Activated naive CD4-positive, alpha-beta T cell treated with anti-CD3 and anti-CD28 coated beads for 36 hours (primary cell): ENCODE measurements at regions of chr3 and their contacts with region 1.

Region 1: DNA sequence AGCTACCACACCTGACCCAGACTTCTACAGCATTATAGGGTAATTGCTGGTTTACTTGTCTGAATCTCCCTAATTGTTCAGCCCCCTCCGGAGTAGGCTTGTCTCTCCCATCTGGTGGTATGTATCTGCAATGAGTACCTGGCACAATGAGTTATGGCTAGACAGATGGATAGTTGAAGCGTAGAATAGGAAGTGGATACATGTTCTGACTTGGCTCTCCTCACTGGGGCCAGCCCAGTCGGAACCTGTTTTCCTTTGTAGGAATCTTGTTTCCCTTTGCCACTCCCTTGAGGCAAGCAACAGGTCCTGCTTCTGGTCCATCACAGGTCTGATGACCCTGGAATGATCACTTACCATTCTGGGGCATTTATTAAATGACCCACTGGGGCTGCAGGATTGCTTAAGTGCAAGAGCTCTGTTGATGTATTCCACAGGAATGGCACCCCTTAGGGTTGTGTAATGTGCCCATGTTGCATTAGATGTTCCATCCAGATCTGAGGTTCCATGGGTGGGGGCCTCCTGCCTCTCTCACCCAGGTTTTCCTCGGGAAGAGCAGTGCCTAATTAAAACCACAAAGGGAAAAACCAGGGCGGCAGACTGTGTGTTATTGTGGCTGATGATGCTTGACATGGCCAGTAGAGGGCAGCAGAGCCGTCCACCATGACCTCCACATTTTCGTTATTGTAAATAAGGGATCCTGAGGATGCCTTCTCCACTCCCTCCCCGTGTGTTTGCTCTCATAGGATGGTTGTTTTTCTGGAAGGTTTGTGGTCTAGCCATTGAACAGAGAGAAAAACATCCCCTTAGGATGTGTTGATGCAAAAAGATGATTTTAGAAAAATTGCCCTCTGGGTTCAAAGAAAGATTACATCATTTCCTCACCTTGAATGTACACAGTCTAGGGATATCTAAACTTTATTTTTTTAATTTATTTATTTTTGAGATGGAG is 58.0 kb downstream of the CMTM8 start:
- DNase-seq: peak; percentile 80
- H3K4me3 Mint-ChIP-seq: peak overlapping the region; percentile 45
- H3K27ac Mint-ChIP-seq: peak overlapping the region; percentile 85
- H3K4me1 Mint-ChIP-seq: peaks cover 24% of the 10 kb centered on the region
- H3K27me3 Mint-ChIP-seq: no peaks in the 10 kb centered on the region

Region 2: DNA sequence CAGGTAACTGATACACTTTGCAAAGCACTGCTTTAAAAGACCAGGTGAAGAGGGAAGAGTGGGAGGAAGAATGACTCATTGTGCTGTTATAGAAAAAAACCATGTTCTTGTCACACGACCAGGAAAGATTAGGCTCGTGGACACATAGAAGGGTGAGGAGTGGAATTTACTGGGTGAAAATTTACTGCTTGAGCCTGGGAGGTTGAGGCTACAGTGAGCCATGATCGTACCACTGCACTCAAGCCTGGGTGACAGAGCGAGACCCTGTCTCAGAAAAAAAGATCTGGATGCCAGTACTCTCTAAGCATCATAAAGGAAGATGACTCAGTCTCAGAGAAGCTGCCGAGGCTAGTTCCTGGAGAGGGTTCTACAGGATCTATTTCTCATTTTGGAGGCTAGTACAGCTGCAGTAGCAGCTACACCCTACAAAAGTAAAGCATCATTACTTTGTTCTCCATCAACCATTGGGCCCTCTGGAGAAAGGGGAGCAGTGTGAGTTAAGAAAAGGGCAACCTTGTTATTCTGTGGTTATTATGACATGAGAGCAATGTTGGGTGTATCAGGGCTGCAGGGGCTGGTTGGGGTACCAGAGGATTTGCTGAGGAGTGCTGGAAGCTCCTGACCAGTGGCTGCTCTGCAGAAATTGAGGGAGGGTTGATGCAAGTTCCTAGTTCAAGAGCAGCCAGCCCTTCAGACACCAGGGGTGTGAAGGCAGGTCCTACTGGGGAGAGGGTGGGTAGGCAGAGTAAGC is 17.4 kb after region 1 on chr3:
- CTCF ChIA-PET with region 1: interaction called, 10 read pairs
- intact Hi-C with region 1: loop called (anchors 2 kb)
- DNase-seq: peak; percentile 70
- H3K4me3 Mint-ChIP-seq: peak overlapping the region; percentile 61
- H3K27ac Mint-ChIP-seq: peak overlapping the region; percentile 86
- H3K4me1 Mint-ChIP-seq: peaks cover 32% of the 10 kb centered on the region
- H3K27me3 Mint-ChIP-seq: no peaks in the 10 kb centered on the region

Region 3: DNA sequence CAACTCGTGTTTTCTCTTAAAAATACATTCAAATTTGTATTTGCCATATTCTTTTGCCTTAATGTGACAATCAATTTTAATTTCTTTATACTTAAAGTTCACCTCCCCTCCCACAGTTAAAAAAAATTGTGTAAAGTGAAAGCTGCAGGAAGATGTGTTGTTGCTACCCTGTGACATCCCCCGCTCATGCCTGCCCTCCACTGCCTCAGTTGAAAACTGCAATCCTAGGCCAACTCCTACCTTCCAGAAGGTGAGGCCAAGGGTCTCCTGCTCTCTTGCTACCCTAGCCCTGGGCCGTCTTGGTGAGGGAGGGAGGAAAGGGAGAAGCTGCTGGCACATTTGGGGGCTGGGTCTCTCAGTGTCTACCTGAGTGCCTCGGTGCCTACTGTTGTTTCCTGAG is 38.1 kb after region 1 on chr3:
- CTCF ChIA-PET with region 1: interaction called, 63 read pairs
- intact Hi-C with region 1: loop called (anchors 1 kb)
- DNase-seq: peak; percentile 83
- H3K4me3 Mint-ChIP-seq: no peak overlapping the region
- H3K27ac Mint-ChIP-seq: peak overlapping the region; percentile 19
- H3K4me1 Mint-ChIP-seq: peaks cover 44% of the 10 kb centered on the region
- H3K27me3 Mint-ChIP-seq: no peaks in the 10 kb centered on the region

Region 4: DNA sequence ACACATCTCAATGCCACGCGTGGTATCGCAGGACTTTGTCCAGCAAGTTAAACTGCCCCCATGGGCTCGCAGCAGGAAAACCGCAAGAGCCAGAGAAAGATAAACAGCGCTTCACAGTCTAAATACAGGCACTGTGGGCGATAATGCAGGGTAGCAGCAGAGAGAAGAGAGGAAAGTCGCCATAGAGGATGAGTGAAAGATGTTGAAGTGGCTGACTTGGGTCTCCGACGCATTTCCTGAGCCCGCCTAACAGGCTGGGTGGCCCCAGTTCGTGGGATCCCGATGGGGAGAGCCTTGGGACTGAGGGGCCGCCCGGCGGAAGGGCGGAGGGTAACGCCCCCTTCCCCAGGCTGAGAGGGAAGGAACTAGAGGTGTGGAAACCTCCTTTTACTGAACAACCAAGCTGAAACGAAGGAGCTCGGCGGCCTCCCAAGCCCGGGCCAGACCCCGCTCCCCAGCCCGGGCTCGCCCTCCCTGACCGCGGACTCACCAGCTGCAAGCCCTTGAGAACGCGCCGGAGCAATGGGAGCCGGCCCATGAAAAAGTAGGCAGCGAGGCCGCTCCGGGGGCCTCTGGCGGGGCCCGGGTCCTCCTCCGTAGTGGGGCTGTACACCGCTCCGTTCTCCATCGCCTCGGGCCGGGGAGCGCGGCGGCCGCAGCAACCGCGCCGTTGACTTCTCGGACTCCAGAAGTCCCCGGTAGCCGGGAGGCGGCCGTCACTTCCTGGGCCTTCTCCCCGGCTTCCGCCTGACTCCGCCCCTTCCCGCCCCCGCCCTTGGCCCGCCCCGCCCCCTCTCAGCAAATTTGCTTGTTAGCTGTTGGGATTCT is 205.8 kb after region 1 on chr3 and contains the start of gene CMTM6:
- CTCF ChIA-PET with region 1: interaction called, 4 read pairs
- intact Hi-C with region 1: loop called (anchors 2 kb)
- DNase-seq: peak; percentile 81
- H3K4me3 Mint-ChIP-seq: peak within 1 kb of the TSS; percentile 97
- H3K27ac Mint-ChIP-seq: peak within 1 kb of the TSS; percentile 89
- H3K4me1 Mint-ChIP-seq: peaks cover 27% of the 10 kb centered on the region
- H3K27me3 Mint-ChIP-seq: no peaks in the 10 kb centered on the region
- total RNA-seq, gene CMTM6: 43.7 to 44.3 TPM